ENCODE measurements at regions of chr11 and their contacts with region 1.

Region 1: GRCh38 chr11:76919887-76920746 is 59.4 kb downstream of the ACER3 start:
- DNase-seq: peak; percentile 64 to 75
- H3K4me3 ChIP-seq: no peak overlapping the region
- H3K27ac ChIP-seq: no peak overlapping the region
- H3K4me1 ChIP-seq: no peaks in the 10 kb centered on the region
- H3K27me3 ChIP-seq: no peaks in the 10 kb centered on the region
- CTCF ChIP-seq: peak; percentile 78 to 92 (median 80)
- POLR2A ChIP-seq: no peak

Region 2: GRCh38 chr11:76807206-76807875 is 112.8 kb before region 1 on chr11:
- intact Hi-C with region 1: loop called (anchors 10 kb)
- DNase-seq: peak; percentile 82 to 86
- H3K4me3 ChIP-seq: no peak overlapping the region
- H3K27ac ChIP-seq: no peak overlapping the region
- H3K4me1 ChIP-seq: no peaks in the 10 kb centered on the region
- H3K27me3 ChIP-seq: no peaks in the 10 kb centered on the region
- CTCF ChIP-seq: peak; percentile 75 to 78 (median 76)
- POLR2A ChIP-seq: no peak

Measured in uterus (tissue), 4 donors.